ENCODE measurements at regions of chr19 and their contacts with region 1.

Region 1: DNA sequence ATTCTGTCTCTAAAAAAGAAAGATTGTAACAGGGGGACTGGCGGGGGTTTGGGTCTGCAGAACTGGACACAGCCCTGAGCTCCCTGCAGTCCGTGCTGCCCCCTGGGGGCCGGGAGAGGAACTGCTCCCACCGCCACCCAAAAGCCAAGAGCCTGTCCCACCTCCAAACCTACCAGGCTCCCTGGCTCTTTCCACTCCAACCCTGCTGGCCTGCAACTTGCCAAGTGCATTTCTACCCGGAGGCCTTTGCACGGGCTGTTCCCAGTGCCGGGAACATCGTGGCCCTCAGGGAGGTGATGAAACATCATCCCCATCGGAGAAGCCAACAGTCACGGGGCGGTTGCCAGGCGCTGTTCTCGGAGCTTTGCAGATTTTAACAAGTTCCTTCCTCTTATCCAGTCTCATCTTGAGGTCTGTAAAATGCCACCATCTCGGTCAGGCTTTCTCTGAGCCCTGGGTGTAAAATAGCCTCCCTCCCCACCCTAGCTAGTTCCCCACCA is 50.7 kb downstream of the SMIM24 start:
- DNase-seq: peak; percentile 86
- ATAC-seq: peak; percentile 83
- H3K4me3 Mint-ChIP-seq: no peak overlapping the region
- H3K27ac Mint-ChIP-seq: no peak overlapping the region
- H3K4me1 Mint-ChIP-seq: peaks cover 6% of the 10 kb centered on the region
- H3K27me3 Mint-ChIP-seq: no peaks in the 10 kb centered on the region

Region 2: DNA sequence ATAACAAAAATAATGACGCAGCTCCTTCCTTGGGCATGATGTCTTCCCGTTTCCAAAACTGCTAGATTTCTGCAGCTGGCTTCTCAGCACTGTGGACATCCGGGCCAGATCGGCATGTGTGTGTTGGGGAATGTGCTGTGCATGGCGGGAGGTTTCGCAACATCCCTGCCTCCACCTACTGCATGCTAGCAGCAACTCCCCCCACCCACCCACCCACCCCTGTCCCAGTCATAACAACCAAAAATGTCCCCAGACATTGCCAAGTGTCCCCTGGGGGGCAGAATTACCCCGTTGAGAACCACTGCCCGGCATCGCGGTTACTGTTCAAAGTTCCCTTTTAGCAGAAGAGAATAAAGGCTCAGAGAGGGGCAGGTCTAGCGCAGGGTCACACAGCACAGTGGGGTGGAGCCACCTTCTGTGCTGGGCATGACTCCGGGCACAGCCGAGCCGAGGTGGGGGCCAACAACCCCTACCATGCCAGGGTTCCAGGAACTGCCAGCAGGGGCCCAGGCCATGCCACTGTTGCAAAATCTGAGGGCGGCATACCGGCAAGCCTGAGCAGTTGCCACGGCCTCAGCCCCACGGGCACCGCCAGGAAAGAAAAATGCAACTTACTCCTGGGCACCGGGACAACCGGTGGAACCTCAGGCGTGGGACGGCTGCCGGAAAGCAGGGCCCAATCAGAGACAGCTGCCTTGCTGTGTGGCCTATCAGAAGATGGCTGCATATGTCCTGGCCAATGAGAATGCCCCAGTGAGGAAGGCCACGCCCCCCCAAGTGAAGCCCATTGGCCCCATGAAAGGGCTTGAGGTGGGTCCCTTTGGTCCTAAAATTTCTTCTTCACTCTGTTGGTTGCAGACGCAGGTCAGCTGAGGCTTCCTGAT is 85.8 kb before region 1 on chr19:
- CTCF ChIA-PET with region 1: interaction called, 3 read pairs
- POLR2A ChIA-PET with region 1: no interaction called
- intact Hi-C with region 1: loop called in 1 of 2 experiments (anchors 5 kb)
- DNase-seq: peak; percentile 62
- ATAC-seq: peak; percentile 90
- H3K4me3 Mint-ChIP-seq: no peak overlapping the region
- H3K27ac Mint-ChIP-seq: no peak overlapping the region
- H3K4me1 Mint-ChIP-seq: peaks cover under 1% of the 10 kb centered on the region
- H3K27me3 Mint-ChIP-seq: no peaks in the 10 kb centered on the region

Region 3: DNA sequence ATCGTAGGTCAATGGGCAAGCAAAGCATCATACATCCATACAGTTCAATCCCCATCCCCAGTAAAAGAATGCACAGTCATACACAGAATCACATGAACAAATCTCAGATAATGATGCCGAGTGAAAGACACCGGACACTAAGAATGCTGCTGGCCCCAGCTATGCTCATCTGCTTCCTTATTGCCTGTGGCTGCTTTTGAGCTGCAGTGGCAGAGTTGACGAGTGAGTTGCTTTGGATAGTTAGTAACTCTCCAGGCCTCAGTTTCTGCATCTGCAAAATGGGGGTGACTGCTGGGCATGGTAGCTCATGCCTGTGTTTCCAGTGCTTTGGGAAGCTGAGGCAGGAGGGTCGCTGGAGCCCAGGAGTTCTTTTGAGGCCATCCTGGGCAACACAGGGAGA is 76.1 kb before region 1 on chr19:
- CTCF ChIA-PET with region 1: interaction called, 10 read pairs
- POLR2A ChIA-PET with region 1: no interaction called
- intact Hi-C with region 1: no loop called
- DNase-seq: no peak
- ATAC-seq: no peak
- H3K4me3 Mint-ChIP-seq: no peak overlapping the region
- H3K27ac Mint-ChIP-seq: no peak overlapping the region
- H3K4me1 Mint-ChIP-seq: peaks cover 13% of the 10 kb centered on the region
- H3K27me3 Mint-ChIP-seq: peaks cover 8% of the 10 kb centered on the region

Region 4: DNA sequence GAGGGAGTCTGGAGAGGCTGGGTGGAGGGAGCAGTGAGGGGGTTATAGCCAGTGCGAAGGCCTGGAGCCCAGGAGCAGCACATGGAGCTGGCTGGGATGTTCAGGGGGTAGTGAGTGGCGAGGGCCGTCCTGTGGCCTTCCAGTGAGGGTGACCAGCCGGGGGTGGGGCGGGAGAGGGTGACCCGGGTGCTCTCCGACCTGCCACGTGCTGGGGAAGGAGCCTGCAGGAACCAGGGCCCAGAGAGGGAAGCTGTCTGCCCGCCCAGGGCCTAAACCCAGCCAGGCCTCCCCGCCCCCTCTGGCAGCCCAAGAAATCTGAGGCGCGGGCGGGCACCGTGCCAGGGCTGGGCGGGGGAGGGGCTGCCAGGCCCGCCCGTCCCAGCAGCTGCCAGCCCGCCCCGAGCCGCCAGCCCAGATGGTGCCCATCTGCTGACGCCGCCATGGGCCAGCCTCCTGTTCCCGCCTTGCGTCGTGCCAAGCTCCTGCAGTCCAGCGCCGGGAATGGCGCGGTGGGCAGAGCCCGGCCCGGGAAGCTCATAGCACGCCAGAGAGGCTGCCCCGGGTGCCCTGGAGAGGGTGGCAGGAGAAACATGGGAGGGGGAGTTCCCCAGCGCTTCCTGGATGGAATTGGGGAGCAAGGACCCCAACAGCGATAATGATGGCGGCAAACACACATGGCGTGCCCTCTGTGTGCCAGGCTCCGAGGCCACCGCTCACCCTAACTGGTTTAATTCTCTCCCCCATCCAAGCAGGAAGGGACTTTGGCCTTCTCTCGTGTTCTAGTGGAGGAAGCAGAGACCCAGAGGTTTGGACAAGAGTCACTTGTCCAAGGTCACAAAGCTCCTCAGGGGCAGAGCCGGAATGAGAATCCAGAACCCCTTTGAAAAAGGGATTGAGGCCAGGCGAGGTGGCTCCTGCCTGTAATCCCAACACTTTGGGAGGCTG is 41.7 kb before region 1 on chr19:
- CTCF ChIA-PET with region 1: no interaction called
- POLR2A ChIA-PET with region 1: no interaction called
- intact Hi-C with region 1: no loop called
- DNase-seq: no peak
- ATAC-seq: no peak
- H3K4me3 Mint-ChIP-seq: no peak overlapping the region
- H3K27ac Mint-ChIP-seq: no peak overlapping the region
- H3K4me1 Mint-ChIP-seq: peaks cover 5% of the 10 kb centered on the region
- H3K27me3 Mint-ChIP-seq: no peaks in the 10 kb centered on the region

Region 5: DNA sequence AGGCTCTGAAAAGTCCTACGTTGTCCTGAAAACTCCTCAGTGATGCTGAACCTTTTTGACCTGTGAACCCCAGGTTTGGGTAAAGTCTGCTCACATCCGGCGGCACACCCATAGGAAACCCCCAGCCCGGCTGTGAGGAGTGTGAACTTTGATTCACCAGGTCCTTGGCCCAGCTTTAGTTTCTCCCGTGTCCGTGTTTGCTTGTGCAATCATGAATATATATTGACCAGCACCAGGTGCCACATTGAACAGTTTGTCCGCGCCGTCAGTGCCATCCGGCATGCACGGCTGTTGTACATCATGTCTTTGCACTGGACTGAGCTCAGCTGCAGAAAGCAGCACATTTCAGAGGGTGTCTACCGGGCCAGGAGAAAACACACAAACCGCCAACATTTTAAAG is 18.0 kb before region 1 on chr19:
- CTCF ChIA-PET with region 1: interaction called, 10 read pairs
- POLR2A ChIA-PET with region 1: no interaction called
- intact Hi-C with region 1: no loop called
- DNase-seq: no peak
- ATAC-seq: no peak
- H3K4me3 Mint-ChIP-seq: no peak overlapping the region
- H3K27ac Mint-ChIP-seq: no peak overlapping the region
- H3K4me1 Mint-ChIP-seq: no peaks in the 10 kb centered on the region
- H3K27me3 Mint-ChIP-seq: no peaks in the 10 kb centered on the region

Measured in activated CD4-positive, alpha-beta T cell treated with anti-CD3 and anti-CD28 coated beads for 36 hours (primary cell).